ENCODE measurements at regions of chr6 and their contacts with region 1.

Region 1: DNA sequence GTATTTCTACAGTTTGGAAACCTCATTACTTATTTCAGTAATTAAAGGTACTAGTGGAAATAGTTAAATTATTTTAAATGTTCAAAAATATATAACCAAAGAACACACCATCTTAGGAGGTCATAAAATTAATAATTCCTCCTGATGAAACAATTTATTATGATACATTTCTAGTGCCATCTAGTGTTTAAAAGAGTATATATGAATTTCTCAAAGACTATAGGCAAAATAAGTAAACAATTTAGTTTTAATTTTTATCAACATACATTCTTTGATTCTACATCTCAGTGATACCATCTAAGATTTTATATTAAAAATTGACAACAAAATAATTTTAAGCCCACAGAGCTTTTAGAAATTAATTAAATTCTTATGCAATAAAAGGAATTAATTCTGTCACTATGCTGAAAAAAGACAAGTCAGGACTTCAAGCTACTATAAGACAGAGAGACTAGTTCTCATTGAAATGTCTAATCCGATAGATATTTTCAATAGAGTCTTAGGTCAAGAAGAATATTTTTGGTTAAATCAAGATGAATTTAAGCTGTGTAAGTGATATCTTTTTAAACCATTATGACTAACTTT is 107.8 kb upstream of the RNF217 start:
- H3K4me3 Mint-ChIP-seq: no peak overlapping the region
- H3K27ac Mint-ChIP-seq: no peak overlapping the region
- H3K4me1 Mint-ChIP-seq: no peaks in the 10 kb centered on the region
- H3K27me3 Mint-ChIP-seq: no peaks in the 10 kb centered on the region

Region 2: GRCh38 chr6:123415844-123416468 is 1438.5 kb before region 1 on chr6:
- intact Hi-C with region 1: loop called (anchors 5 kb)
- H3K4me3 Mint-ChIP-seq: no peak overlapping the region
- H3K27ac Mint-ChIP-seq: no peak overlapping the region
- H3K4me1 Mint-ChIP-seq: no peaks in the 10 kb centered on the region
- H3K27me3 Mint-ChIP-seq: no peaks in the 10 kb centered on the region

Region 3: DNA sequence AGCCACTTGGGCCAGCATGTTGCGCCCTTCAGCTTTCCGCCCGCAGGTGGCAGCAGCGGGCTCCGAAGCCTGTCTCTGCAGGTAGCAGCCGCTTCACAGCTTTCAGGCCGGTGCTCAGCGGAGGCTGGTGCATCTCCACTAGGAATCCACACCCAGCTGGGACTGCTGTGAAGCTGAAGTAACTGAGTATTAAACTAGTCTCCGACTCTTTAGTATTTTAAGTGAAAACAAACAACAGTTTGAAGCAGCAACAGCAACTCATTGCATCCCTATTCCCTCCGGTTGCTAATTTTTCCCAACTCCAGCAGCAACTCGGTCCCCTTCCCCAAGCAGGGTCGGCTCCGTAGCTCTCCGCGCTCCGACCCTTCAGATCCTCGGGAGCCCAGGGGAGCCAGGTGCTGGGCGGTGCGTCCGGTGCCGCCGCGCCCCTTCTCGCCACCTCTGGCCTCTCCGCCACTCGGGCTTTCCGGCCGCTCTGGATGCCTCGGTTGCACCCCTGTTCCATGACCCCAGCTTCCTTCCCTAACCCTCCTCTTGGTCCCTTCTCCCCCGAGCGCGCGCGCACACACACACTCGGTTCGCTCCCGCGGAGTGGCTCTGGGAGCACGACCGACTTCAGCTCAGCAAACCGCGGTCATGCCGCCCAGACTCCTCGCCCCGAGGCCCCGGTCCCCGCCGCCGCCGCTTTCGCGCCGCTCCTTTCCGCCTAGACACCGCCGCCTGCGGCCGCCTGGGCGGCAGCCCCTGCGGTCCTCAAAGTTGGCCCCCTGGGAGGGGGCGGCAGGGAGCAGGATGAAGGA is 1051.5 kb before region 1 on chr6:
- intact Hi-C with region 1: loop called (anchors 1 kb)
- H3K4me3 Mint-ChIP-seq: peak overlapping the region; percentile 77
- H3K27ac Mint-ChIP-seq: no peak overlapping the region
- H3K4me1 Mint-ChIP-seq: peaks cover 18% of the 10 kb centered on the region
- H3K27me3 Mint-ChIP-seq: peaks cover 30% of the 10 kb centered on the region

Region 4: GRCh38 chr6:124870611-124871459 is 16.4 kb after region 1 on chr6:
- intact Hi-C with region 1: no loop called
- H3K4me3 Mint-ChIP-seq: no peak overlapping the region
- H3K27ac Mint-ChIP-seq: no peak overlapping the region
- H3K4me1 Mint-ChIP-seq: no peaks in the 10 kb centered on the region
- H3K27me3 Mint-ChIP-seq: no peaks in the 10 kb centered on the region

Measured in dendritic cell treated with granulocyte-macrophage colony-stimulating factor and Interleukin-4, amounts not matched to agents 40 ng/mL and 50 ng/mL, for 4 days (primary cell).